ENCODE measurements at regions of chr1 and their contacts with region 1.

Region 1: DNA sequence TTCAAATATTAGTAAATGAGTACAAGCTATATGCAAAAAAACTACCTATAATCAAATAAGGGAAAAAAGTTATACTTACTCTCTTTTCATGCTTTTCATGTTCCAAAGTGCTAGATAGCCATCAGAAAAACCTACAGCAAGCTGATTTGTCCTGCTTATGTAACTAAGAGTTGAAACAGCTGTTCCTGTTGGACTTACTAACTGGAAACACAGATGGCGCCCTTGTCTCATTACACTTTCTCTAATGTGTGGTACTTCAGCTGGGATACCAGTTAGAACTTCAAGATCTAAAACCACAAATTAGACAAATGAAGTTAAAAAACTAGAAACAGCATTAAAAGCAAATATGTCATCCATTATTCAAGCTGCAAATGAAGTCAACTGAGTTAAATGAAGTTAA is 24.3 kb downstream of the AHCTF1 start:
- DNase-seq: no peak
- H3K4me3 ChIP-seq: no peak overlapping the region
- CTCF ChIP-seq: peak; percentile 38

Region 2: DNA sequence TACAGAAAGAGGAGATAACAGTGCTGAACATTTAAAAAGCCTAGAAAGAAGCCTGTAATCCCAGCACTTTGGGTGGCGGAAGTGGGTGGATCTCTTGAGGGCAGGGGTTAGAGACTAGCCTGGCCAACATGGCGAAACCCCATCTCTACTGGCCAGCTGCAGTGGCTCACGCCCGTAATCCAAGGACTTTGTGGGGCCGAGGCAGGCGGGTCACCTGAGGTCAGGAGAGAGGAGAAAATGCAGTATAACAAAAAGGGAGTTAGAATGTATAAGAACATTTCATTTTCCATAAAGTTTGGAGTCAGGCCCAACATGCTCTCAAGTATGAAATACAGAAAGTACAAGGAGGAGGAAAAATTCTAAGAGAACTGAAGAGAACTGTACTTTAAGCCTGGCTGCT is 534.9 kb before region 1 on chr1:
- CTCF ChIA-PET with region 1: no interaction called
- POLR2A ChIA-PET with region 1: no interaction called
- DNase-seq: no peak
- H3K4me3 ChIP-seq: no peak overlapping the region
- CTCF ChIP-seq: no peak

Region 3: DNA sequence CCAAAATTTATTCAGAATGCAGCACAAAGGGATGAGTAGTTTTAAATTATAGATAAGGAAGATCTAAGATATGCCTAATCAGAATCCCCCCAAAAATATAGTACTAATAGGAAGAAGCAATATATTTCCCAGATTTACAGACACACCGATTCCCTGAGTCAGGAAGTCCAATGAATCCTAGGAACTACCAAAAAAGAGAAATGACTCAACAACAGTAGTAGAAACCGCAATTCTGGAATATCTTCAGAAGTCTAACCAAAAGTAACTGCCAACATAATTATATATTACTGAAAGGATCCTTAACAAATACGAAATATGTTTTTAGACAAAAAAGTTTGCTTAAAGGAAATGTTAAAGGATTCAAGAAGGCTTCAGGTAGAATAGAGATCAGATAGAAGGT is 14.0 kb after region 1 on chr1:
- CTCF ChIA-PET with region 1: interaction called, 11 read pairs
- POLR2A ChIA-PET with region 1: no interaction called
- DNase-seq: no peak
- H3K4me3 ChIP-seq: no peak overlapping the region
- CTCF ChIP-seq: no peak

Region 4: DNA sequence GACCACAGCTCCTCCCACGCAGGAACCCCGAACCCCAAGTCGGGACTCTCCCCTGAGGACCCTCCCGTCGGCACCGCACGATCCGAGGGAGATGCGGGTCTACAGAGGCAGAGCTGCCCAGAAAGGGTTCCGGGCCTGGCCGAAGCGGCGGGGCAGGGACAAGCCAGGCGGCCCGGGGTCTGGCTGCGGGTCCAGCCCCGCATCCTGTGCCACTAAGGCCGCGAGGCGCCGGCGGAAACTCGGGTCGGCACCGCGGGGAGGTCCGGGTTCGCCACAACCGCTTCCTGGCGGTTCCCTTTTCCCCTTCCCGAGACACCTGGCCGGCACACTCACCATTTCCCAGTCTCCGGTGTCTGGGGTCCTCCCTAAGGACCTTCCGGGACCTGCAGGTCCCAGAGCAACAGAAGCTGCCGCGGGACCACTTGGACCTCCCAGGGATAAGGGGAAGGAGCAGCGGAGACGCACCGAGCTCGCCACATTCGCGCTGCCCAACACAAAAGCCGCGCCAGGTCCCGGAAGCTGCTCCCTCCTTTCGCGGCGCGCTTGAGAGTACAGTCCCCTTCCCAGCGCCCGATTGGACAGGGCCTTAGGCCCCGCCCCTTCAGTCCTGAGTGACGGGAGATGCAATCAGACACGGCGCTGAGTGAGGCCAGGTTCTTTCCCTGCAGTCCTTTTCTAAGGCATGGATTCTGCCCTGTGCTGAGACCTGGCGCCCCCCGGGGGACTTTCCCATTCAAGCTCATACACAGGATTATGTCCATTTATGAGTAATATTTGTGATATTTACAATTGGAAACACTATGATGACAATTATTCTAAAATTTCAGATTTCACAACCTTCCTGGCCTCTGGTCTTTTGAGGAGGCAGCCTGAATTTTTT is 171.0 kb after region 1 on chr1 and contains the start of gene ZNF670:
- CTCF ChIA-PET with region 1: interaction called, 27 read pairs
- POLR2A ChIA-PET with region 1: no interaction called
- DNase-seq: peak; percentile 82
- H3K4me3 ChIP-seq: peak within 1 kb of the TSS; percentile 91
- CTCF ChIP-seq: peak; percentile 60

Measured in AG04449 (cell line).